GM12878 (cell line): ENCODE measurements at regions of chr1 and their contacts with region 1.

Region 1: GRCh38 chr1:109404838-109405237 is 7.1 kb upstream of the SORT1 start:
- DNase-seq: no peak
- ATAC-seq: peak; percentile 36; the same call in 2 of the 3 replicates
- H3K4me3 ChIP-seq: no peak overlapping the region
- H3K27ac ChIP-seq: no peak overlapping the region
- H3K4me1 ChIP-seq: no peaks in the 10 kb centered on the region
- H3K27me3 ChIP-seq: no peaks in the 10 kb centered on the region
- CTCF ChIP-seq: no peak
- EP300 ChIP-seq: no peak
- POLR2A ChIP-seq: no peak
- RAD21 ChIP-seq: no peak

Region 2: DNA sequence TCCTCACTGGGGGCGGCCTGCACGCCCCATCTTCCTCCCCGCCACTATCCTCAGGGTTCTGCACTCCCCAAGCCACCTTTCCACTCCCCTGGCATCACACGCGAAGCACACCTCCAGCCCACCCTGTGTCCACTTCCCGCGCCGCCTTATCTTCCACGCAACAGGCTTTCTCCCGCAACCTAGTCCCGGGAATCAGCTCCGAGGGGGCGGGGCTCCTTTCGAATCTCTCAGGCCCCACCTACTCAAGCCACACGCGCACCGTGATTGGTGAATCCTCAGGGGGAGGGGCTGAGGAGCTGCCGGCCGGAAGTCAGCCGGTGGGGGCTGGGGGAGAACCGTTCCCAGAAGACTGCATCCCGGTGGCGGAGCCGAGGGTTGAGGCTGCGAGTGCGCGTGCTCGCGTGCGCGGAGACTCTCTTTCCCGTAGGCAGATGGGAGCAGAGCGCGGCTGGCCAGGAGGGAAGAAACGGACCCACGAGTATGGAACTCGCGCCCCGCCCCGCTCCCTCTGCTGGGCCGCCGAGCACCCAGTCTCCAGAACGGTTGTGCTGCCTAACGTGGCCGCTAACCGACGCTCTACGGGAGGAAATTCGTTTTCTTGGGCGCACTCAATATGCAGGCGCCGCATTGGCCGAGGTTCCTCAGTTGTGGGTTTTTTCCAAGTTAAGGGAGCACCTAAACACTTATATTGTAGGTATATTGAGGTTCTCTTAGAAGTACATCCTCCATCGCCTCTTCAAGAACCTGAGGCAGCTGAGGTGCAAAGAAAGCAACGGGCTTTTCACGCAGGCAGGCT is 121.7 kb before region 1 on chr1 and contains the start of gene PSRC1:
- CTCF ChIA-PET with region 1: interaction called, 241 read pairs
- POLR2A ChIA-PET with region 1: no interaction called
- RAD21 ChIA-PET with region 1: interaction called, 87 read pairs
- SMC1A ChIA-PET with region 1: interaction called, 113 read pairs
- in situ Hi-C with region 1: no loop called
- intact Hi-C with region 1: no loop called
- DNase-seq: peak; percentile 62
- ATAC-seq: peak; percentile 99
- H3K4me3 ChIP-seq: peak within 1 kb of the TSS; percentile 86
- H3K27ac ChIP-seq: peak within 1 kb of the TSS; percentile 83
- H3K4me1 ChIP-seq: peaks cover 3% of the 10 kb centered on the region
- H3K27me3 ChIP-seq: no peaks in the 10 kb centered on the region
- CTCF ChIP-seq: peak; percentile 51 to 61 (median 55)
- EP300 ChIP-seq: no peak
- POLR2A ChIP-seq: peak; percentile 87
- RAD21 ChIP-seq: peak; percentile 50
- polyA plus RNA-seq, gene PSRC1: 1.2 to 2.0 TPM